ENCODE measurements at regions of chr20 and their contacts with region 1.

Region 1: GRCh38 chr20:33810885-33811777 is at the start of gene CHMP4B:
- DNase-seq: peak; percentile 99
- ATAC-seq: peak; percentile 94
- H3K4me3 ChIP-seq: peak within 1 kb of the TSS; percentile 83 to 96 (median 87)
- H3K27ac ChIP-seq: peak within 1 kb of the TSS; percentile 72
- H3K4me1 ChIP-seq: peaks cover 59% of the 10 kb centered on the region
- H3K27me3 ChIP-seq: no peaks in the 10 kb centered on the region; a peak in 1 of 5 replicates
- CTCF ChIP-seq: no peak
- EP300 ChIP-seq: peak; percentile 40 to 54; a peak in 2 of 4 replicates
- POLR2A ChIP-seq: peak; percentile 70 to 74
- RAD21 ChIP-seq: peak; percentile 70
- total RNA-seq, gene CHMP4B: 40.1 and 55.7 TPM in 2 replicates

Region 2: DNA sequence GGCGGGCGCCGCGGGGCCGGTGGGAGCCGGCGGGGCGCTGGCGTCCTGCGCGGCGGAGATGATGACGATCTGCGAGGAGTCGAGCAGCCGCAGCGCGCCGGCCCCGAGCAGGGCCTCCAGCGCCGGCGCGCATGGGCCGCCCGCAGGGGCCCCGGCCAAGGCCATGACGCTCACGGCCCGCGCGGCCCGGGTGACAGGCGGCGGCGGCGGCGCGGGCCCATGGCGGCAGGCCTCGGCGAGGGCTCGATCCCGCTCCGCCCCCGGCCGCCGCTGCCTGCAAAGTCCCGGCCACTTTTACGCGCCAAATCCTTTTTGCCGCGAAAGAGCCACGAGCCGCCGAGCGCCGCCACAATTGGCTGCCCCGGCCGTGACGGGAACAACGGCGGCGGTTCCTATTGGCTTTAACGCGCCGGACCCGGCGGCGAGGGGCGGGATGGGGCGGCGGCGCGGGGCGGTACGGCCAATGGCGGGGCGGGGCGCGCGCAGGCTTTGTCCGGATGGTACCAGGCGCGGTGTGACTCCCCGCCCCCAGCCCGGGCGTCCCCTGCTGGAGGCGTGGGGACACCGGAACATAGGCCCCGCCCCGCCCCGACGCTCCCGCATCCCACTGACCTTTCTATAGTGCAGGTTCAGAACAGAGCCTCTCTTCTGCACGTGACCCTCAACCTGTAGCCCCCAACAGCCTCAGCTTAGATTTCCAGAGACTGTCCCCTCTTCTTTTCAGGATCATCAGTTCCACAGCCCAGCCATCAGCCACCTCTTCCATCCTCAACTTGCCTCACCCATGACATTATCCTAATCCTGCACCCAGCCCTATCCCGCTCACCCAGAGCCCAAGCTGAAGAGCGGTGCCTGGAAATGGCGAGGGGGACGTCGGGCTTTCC is 124.8 kb before region 1 on chr20 and contains the start of gene E2F1:
- CTCF ChIA-PET with region 1: no interaction called
- POLR2A ChIA-PET with region 1: no interaction called
- in situ Hi-C with region 1: no loop called
- intact Hi-C with region 1: loop called (anchors 5 kb)
- DNase-seq: peak; percentile 94
- ATAC-seq: peak; percentile 91
- H3K4me3 ChIP-seq: peak within 1 kb of the TSS; percentile 58 to 82 (median 65)
- H3K27ac ChIP-seq: peak within 1 kb of the TSS; percentile 56
- H3K4me1 ChIP-seq: peaks cover 63% of the 10 kb centered on the region
- H3K27me3 ChIP-seq: no peaks in the 10 kb centered on the region
- CTCF ChIP-seq: peak; percentile 82
- EP300 ChIP-seq: no peak
- POLR2A ChIP-seq: peak; percentile 42 to 51; a peak in 1 of 4 replicates
- RAD21 ChIP-seq: peak; percentile 5
- total RNA-seq, gene E2F1: 25.3 and 39.4 TPM in 2 replicates

Region 3: GRCh38 chr20:33731693-33732165 is 79.4 kb before region 1 on chr20 and contains the start of gene ZNF341:
- CTCF ChIA-PET with region 1: no interaction called
- POLR2A ChIA-PET with region 1: interaction called, 6 read pairs
- in situ Hi-C with region 1: no loop called
- intact Hi-C with region 1: loop called (anchors 1 kb)
- DNase-seq: peak; percentile 90
- ATAC-seq: peak; percentile 76
- H3K4me3 ChIP-seq: peak within 1 kb of the TSS; percentile 60 to 81 (median 65)
- H3K27ac ChIP-seq: peak within 1 kb of the TSS; percentile 84
- H3K4me1 ChIP-seq: peaks cover 34% of the 10 kb centered on the region
- H3K27me3 ChIP-seq: no peaks in the 10 kb centered on the region
- CTCF ChIP-seq: peak; percentile 96
- EP300 ChIP-seq: peak in 1 of 2 experiments; percentile 80; a peak in 2 of 4 replicates
- POLR2A ChIP-seq: no peak
- RAD21 ChIP-seq: peak; percentile 99
- total RNA-seq, gene ZNF341: 0.97 and 1.1 TPM in 2 replicates

Region 4: DNA sequence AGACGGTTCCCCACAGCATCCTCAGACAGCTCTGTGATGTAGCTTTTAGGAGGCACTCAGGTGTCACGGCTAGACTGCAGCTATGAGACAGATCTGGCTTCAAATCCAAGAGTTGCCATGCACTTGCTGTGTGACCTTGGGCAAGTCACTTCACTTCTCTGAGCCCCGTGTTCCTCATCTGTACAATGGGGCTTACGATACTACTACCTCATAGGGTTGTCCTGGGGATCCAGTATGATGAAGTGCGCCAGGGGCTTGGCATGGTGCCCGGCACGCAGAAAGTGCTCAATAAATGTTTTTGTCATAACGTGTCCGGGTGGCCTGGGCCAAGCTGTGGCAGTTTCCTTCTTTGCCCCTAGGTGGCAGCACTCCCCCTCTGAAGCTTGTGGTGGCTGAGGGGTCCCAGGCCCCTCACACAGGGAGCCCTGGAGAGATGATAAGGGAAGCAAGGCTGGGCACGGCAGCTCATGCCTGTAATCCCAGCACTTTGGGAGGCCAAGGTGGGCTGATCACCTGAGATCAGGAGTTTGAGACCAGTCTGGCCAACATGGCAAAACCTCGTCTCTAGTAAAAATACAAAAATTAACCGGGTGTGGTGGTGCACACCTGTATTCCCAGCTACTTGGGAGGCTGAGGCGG is 19.1 kb before region 1 on chr20:
- CTCF ChIA-PET with region 1: no interaction called
- POLR2A ChIA-PET with region 1: interaction called, 35 read pairs
- in situ Hi-C with region 1: no loop called
- intact Hi-C with region 1: no loop called
- DNase-seq: peak; percentile 61
- ATAC-seq: peak; percentile 63
- H3K4me3 ChIP-seq: no peak overlapping the region
- H3K27ac ChIP-seq: no peak overlapping the region
- H3K4me1 ChIP-seq: peaks cover 43% of the 10 kb centered on the region
- H3K27me3 ChIP-seq: 0 out of 5 replicates have a peak, but pooled peaks cover 0 to 5% of the 10 kb centered on the region in 2 experiments
- CTCF ChIP-seq: peak; percentile 99
- EP300 ChIP-seq: no peak
- POLR2A ChIP-seq: no peak
- RAD21 ChIP-seq: peak; percentile 96

Region 5: GRCh38 chr20:33826270-33826897 is 15.3 kb after region 1 on chr20:
- CTCF ChIA-PET with region 1: no interaction called
- POLR2A ChIA-PET with region 1: interaction called, 140 read pairs
- in situ Hi-C with region 1: no loop called
- intact Hi-C with region 1: loop called (anchors 1 kb)
- DNase-seq: peak; percentile 88
- ATAC-seq: peak; percentile 82
- H3K4me3 ChIP-seq: peak overlapping the region in 1 of 3 experiments; percentile 8; a peak in 1 of 6 replicates
- H3K27ac ChIP-seq: peak overlapping the region; percentile 49
- H3K4me1 ChIP-seq: peaks cover 60% of the 10 kb centered on the region
- H3K27me3 ChIP-seq: no peaks in the 10 kb centered on the region
- CTCF ChIP-seq: no peak
- EP300 ChIP-seq: no peak
- POLR2A ChIP-seq: no peak
- RAD21 ChIP-seq: no peak

Region 6: DNA sequence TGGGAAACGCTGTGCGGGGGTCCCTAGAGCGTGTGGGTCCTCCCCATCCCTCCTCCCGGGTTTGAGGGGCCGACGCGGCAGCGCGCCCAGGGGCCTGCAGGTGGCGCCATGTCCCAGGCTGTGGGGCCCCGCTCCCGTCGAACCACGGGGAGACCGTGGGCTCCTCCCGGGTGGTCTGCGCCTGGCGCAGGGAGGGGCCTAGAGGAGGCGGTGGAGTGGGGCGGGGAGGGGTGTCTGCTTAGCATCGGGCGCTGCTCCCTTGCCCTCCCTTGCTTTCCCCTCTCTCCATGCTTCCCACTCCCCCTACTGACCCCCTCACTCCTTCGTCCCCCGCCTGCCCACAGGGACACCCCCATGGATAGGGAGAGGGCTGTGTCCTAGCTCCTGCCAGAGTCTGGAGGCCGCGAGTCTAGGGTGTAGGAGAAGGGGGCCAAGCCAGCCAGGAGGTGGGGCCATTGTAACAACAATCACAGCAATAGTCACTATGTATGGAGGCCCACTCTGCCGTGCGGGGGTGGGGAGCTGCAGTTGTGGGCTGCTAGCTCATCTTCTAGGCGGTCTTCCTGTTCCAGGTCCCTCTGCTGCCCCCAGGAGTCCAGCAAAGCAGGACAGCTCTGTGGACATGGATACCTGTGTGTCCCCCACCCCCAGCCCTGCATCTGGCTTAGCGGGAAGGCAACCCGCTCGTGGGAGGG is 51.7 kb after region 1 on chr20:
- CTCF ChIA-PET with region 1: no interaction called
- POLR2A ChIA-PET with region 1: interaction called, 6 read pairs
- in situ Hi-C with region 1: no loop called
- intact Hi-C with region 1: loop called (anchors 5 kb)
- DNase-seq: peak; percentile 76
- ATAC-seq: peak; percentile 74
- H3K4me3 ChIP-seq: peak overlapping the region in 2 of 3 experiments; percentile 13 to 59; a peak in 3 of 6 replicates
- H3K27ac ChIP-seq: no peak overlapping the region
- H3K4me1 ChIP-seq: peaks cover 42% of the 10 kb centered on the region
- H3K27me3 ChIP-seq: peaks cover 5 to 40% of the 10 kb centered on the region in 2 experiments
- CTCF ChIP-seq: peak; percentile 87
- EP300 ChIP-seq: no peak
- POLR2A ChIP-seq: no peak
- RAD21 ChIP-seq: peak; percentile 87

Region 7: GRCh38 chr20:34111702-34112599 is 300.8 kb after region 1 on chr20 and contains the start of gene EIF2S2:
- CTCF ChIA-PET with region 1: no interaction called
- POLR2A ChIA-PET with region 1: interaction called, 36 read pairs
- in situ Hi-C with region 1: no loop called
- intact Hi-C with region 1: loop called (anchors 5 kb)
- DNase-seq: peak; percentile 99
- ATAC-seq: peak; percentile 91
- H3K4me3 ChIP-seq: peak within 1 kb of the TSS; percentile 93 to 100 (median 96)
- H3K27ac ChIP-seq: peak within 1 kb of the TSS; percentile 92
- H3K4me1 ChIP-seq: peaks cover 63% of the 10 kb centered on the region
- H3K27me3 ChIP-seq: peaks cover 0 to 4% of the 10 kb centered on the region in 2 experiments; a peak in 1 of 5 replicates
- CTCF ChIP-seq: no peak; the same call in 1 of the 2 replicates
- EP300 ChIP-seq: peak in 1 of 2 experiments; percentile 76; a peak in 2 of 4 replicates
- POLR2A ChIP-seq: peak; percentile 96 to 97
- RAD21 ChIP-seq: peak; percentile 83
- total RNA-seq, gene EIF2S2: 213 and 316 TPM in 2 replicates